Activated B cell treated with CpG ODN at 0.5 μM for 24 hours (primary cell): ENCODE measurements at regions of chrX and their contacts with region 1.

Region 1: GRCh38 chrX:2521092-2521926 is 20.5 kb upstream of the DHRSX start:
- DNase-seq: peak; percentile 34
- ATAC-seq: peak; percentile 88
- H3K4me3 Mint-ChIP-seq: peak overlapping the region; percentile 71
- H3K27ac Mint-ChIP-seq: no peak overlapping the region
- H3K4me1 Mint-ChIP-seq: peaks cover 28% of the 10 kb centered on the region
- H3K27me3 Mint-ChIP-seq: no peaks in the 10 kb centered on the region
- CTCF ChIP-seq: no peak

Region 2: DNA sequence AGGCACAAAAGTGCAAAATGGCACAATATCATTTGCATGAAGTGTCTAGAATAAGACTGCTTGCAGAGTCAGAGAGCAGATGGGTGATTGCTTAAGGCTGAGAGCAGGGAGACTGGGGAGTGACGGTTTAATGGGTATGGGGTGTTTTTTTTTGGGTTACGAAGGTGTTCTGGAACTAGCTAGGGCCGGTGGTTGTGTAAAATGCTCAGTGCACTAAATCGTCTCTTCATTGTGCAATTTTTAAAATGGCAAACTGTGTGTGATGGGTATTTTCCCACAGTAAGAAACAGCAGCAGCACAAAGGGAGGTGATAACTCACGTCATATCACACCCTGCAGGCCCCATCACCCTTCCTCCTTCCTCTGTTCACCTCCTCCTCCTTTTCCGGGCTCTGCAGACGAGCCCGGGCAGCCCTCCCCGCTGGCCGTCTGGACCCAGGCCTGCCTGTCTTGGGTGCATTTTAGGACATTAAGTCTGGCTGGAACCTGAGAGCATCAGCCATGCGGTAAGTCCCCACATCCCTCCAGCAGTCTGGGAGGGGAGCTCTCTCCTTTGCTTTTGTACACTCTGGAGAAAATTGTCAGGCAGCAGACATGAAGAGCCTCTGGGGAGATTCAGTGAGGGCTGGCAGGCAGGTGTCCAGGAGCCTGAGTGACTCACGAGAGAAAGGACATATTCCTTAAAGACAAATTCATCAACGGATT is 863.8 kb before region 1 on chrX:
- CTCF ChIA-PET with region 1: no interaction called
- POLR2A ChIA-PET with region 1: no interaction called
- intact Hi-C with region 1: loop called (anchors 10 kb)
- DNase-seq: peak; percentile 18
- ATAC-seq: no peak
- H3K4me3 Mint-ChIP-seq: peak overlapping the region; percentile 80
- H3K27ac Mint-ChIP-seq: peak overlapping the region; percentile 81
- H3K4me1 Mint-ChIP-seq: peaks cover 27% of the 10 kb centered on the region
- H3K27me3 Mint-ChIP-seq: no peaks in the 10 kb centered on the region
- CTCF ChIP-seq: no peak

Region 3: GRCh38 chrX:2500267-2501075 is 20.8 kb before region 1 on chrX and contains the starts of genes DHRSX and ZBED1:
- CTCF ChIA-PET with region 1: no interaction called
- POLR2A ChIA-PET with region 1: no interaction called
- intact Hi-C with region 1: loop called (anchors 1 kb)
- DNase-seq: peak; percentile 63
- ATAC-seq: peak; percentile 77
- H3K4me3 Mint-ChIP-seq: peak within 1 kb of the TSS; percentile 82
- H3K27ac Mint-ChIP-seq: peak within 1 kb of the TSS; percentile 74
- H3K4me1 Mint-ChIP-seq: peaks cover 33% of the 10 kb centered on the region
- H3K27me3 Mint-ChIP-seq: no peaks in the 10 kb centered on the region
- CTCF ChIP-seq: no peak
- total RNA-seq, gene DHRSX: 23.2 and 28.3 TPM in 2 replicates
- total RNA-seq, gene ZBED1: 49.5 and 50.1 TPM in 2 replicates

Region 4: GRCh38 chrX:2577844-2578506 is 56.7 kb after region 1 on chrX:
- CTCF ChIA-PET with region 1: no interaction called
- POLR2A ChIA-PET with region 1: no interaction called
- intact Hi-C with region 1: loop called (anchors 5 kb)
- DNase-seq: no peak
- ATAC-seq: no peak
- H3K4me3 Mint-ChIP-seq: no peak overlapping the region
- H3K27ac Mint-ChIP-seq: no peak overlapping the region
- H3K4me1 Mint-ChIP-seq: peaks cover 8% of the 10 kb centered on the region
- H3K27me3 Mint-ChIP-seq: peaks cover 29% of the 10 kb centered on the region
- CTCF ChIP-seq: no peak